ENCODE measurements at regions of chr11 and their contacts with region 1.

Region 1: DNA sequence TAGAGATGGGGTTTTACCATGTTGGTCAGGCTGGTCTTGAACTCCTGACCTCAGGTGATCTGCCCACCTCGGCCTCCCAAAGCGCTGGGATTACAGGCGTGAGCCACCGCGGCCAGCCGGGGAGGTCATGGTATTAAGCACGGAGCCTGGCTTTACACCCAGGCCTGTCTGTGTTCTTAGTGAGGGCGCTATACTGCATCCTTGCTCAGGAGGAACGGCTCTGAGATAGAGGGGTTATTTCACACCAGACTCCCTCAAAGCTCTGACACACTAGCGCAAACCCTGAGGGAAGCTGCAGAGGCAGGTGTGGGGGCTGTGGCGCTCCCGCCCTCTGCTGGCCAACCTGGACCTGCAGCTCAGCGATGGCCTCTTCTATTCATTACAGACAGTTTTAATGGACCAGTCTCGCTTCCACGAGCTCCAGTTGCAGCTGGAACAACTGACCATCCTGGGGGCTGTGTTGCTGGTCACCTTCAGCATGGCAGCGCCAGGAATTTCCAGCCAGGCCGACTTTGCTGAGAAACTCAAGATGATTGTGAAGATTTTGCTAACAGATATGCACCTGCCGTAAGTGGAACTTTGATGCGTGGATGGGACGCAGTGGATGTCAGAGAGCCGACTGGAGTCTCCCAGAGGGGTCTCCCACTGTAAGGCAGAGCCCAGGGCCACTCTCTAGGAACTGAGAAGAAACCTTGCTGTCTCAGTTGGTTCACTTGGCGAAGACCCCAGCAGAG is 26.2 kb downstream of the TCP11L1 start:
- DNase-seq: peak; percentile 61 to 85 (median 70)
- ATAC-seq: peak; percentile 96
- H3K4me3 ChIP-seq: no peak overlapping the region
- H3K4me3 Mint-ChIP-seq: no peak overlapping the region
- H3K27ac ChIP-seq: no peak overlapping the region
- H3K27ac Mint-ChIP-seq: no peak overlapping the region
- H3K4me1 ChIP-seq: peaks cover 19% of the 10 kb centered on the region
- H3K4me1 Mint-ChIP-seq: peaks cover 30% of the 10 kb centered on the region
- H3K27me3 ChIP-seq: no peaks in the 10 kb centered on the region
- H3K27me3 Mint-ChIP-seq: no peaks in the 10 kb centered on the region
- CTCF ChIP-seq: peak; percentile 97

Region 2: DNA sequence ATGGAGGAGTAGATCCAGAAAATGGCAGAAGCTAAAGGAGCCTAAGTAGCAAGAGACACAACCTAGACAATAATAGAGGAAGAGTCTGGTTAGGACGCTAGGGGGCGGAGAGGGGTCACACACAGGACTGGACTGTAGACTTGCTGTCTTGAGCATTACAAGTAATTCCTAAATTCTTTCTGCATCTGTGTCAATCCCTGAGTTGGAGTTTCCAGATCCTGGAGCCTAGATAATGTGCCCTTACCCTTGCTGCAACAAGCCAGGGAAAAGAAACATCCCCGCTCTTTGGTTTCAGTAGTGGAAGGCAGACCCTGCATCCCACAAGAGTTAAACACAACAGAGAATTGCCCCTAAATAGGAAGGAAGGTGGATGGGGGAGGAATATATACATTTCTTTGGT is 256.3 kb before region 1 on chr11:
- CTCF ChIA-PET with region 1: no interaction called
- POLR2A ChIA-PET with region 1: no interaction called
- intact Hi-C with region 1: loop called in 1 of 2 experiments (anchors 2 kb)
- DNase-seq: peak in 9 of 14 experiments; percentile 7 to 57 (median 21)
- ATAC-seq: peak; percentile 44
- H3K4me3 ChIP-seq: no peak overlapping the region
- H3K4me3 Mint-ChIP-seq: no peak overlapping the region
- H3K27ac ChIP-seq: no peak overlapping the region
- H3K27ac Mint-ChIP-seq: no peak overlapping the region
- H3K4me1 ChIP-seq: no peaks in the 10 kb centered on the region
- H3K4me1 Mint-ChIP-seq: no peaks in the 10 kb centered on the region
- H3K27me3 ChIP-seq: no peaks in the 10 kb centered on the region
- H3K27me3 Mint-ChIP-seq: no peaks in the 10 kb centered on the region
- CTCF ChIP-seq: peak; percentile 45

Region 3: DNA sequence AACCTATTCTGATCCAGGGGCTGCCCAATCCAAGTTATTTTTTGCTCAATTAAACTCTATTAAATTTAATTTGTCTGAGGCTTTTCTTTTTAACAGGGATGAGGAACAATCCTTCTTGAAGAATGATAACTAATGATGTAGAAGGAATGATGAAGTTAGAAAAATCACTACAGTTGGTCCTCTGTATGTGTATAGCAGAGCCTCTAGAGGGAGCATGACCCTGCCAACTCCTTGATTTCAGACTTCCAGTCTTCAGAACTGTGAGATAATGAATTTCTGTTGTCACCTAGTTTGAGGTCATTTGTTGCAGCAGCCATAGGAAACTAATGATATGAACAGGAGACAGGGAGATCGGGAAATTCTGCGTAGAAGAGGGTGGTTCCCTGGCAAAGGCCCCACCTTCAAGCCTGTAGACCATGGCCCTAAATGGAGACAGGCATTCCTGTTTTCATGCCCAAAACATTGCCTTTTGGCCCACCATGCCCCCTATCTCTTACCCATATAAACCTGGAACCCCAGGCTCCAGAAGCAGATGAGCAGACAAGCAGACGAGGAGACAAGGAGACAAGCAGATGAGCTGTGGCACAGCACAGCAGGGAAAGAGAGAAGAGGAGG is 180.7 kb before region 1 on chr11:
- CTCF ChIA-PET with region 1: no interaction called
- POLR2A ChIA-PET with region 1: no interaction called
- intact Hi-C with region 1: loop called (anchors 5 to 10 kb)
- DNase-seq: peak in 3 of 14 experiments; percentile 13 to 34 (median 33)
- ATAC-seq: peak; percentile 52
- H3K4me3 ChIP-seq: no peak overlapping the region
- H3K4me3 Mint-ChIP-seq: no peak overlapping the region
- H3K27ac ChIP-seq: no peak overlapping the region
- H3K27ac Mint-ChIP-seq: no peak overlapping the region
- H3K4me1 ChIP-seq: no peaks in the 10 kb centered on the region
- H3K4me1 Mint-ChIP-seq: no peaks in the 10 kb centered on the region
- H3K27me3 ChIP-seq: no peaks in the 10 kb centered on the region
- H3K27me3 Mint-ChIP-seq: no peaks in the 10 kb centered on the region
- CTCF ChIP-seq: peak; percentile 47

Region 4: DNA sequence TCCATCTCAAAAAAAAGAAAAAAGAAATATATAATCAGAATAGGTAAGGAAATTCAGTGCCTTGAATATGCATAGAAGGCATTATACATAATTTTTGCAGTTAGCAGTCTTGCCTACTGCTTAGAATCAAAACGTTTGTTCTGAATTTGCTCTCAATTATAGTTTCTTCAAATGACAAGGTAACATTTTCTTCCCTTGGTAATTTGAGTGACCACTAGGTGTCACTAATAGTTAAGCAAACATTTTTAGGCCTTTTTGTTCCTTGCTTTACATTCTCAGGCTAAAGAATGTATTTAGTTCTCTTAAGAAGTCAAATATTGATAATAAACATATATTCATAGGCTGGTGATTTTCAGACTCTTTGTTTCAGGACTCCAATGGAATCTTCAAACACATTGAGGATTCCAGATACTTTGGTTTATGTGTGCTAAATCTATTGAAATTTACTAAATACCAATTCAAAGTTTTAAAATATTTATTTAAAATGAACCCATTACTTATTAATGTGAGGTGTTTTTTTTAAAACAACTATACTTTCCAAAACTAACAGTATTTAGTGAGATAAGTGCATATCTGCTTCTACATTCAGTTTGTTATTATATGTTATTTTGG is 105.0 kb before region 1 on chr11:
- CTCF ChIA-PET with region 1: interaction called, 48 read pairs
- POLR2A ChIA-PET with region 1: no interaction called
- intact Hi-C with region 1: loop called (anchors 1 kb)
- DNase-seq: peak in 3 of 14 experiments; percentile 63 to 73 (median 73)
- ATAC-seq: no peak
- H3K4me3 ChIP-seq: no peak overlapping the region
- H3K4me3 Mint-ChIP-seq: no peak overlapping the region
- H3K27ac ChIP-seq: no peak overlapping the region
- H3K27ac Mint-ChIP-seq: no peak overlapping the region
- H3K4me1 ChIP-seq: no peaks in the 10 kb centered on the region
- H3K4me1 Mint-ChIP-seq: no peaks in the 10 kb centered on the region
- H3K27me3 ChIP-seq: no peaks in the 10 kb centered on the region
- H3K27me3 Mint-ChIP-seq: no peaks in the 10 kb centered on the region
- CTCF ChIP-seq: peak; percentile 81

Region 5: GRCh38 chr11:33000181-33000580 is 65.4 kb before region 1 on chr11:
- CTCF ChIA-PET with region 1: interaction called, 3 read pairs
- POLR2A ChIA-PET with region 1: no interaction called
- intact Hi-C with region 1: loop called in 1 of 2 experiments (anchors 10 kb)
- DNase-seq: no peak
- ATAC-seq: no peak
- H3K4me3 ChIP-seq: no peak overlapping the region
- H3K4me3 Mint-ChIP-seq: no peak overlapping the region
- H3K27ac ChIP-seq: no peak overlapping the region
- H3K27ac Mint-ChIP-seq: no peak overlapping the region
- H3K4me1 ChIP-seq: peaks cover 7% of the 10 kb centered on the region
- H3K4me1 Mint-ChIP-seq: peaks cover 16% of the 10 kb centered on the region
- H3K27me3 ChIP-seq: no peaks in the 10 kb centered on the region
- H3K27me3 Mint-ChIP-seq: no peaks in the 10 kb centered on the region
- CTCF ChIP-seq: no peak

Region 6: GRCh38 chr11:33039274-33040032 is 26.2 kb before region 1 on chr11 and contains the start of gene TCP11L1:
- CTCF ChIA-PET with region 1: interaction called, 11 read pairs
- POLR2A ChIA-PET with region 1: interaction called, 13 read pairs
- intact Hi-C with region 1: no loop called
- DNase-seq: peak; percentile 66 to 91 (median 78)
- ATAC-seq: peak; percentile 85
- H3K4me3 ChIP-seq: peak within 1 kb of the TSS; percentile 99
- H3K4me3 Mint-ChIP-seq: peak within 1 kb of the TSS; percentile 98
- H3K27ac ChIP-seq: peak within 1 kb of the TSS; percentile 62 to 90
- H3K27ac Mint-ChIP-seq: peak within 1 kb of the TSS; percentile 95
- H3K4me1 ChIP-seq: peaks cover 17% of the 10 kb centered on the region
- H3K4me1 Mint-ChIP-seq: peaks cover 17% of the 10 kb centered on the region
- H3K27me3 ChIP-seq: no peaks in the 10 kb centered on the region
- H3K27me3 Mint-ChIP-seq: peaks cover 5% of the 10 kb centered on the region
- CTCF ChIP-seq: no peak
- total RNA-seq, gene TCP11L1: 9.8 to 11.9 TPM

Region 7: DNA sequence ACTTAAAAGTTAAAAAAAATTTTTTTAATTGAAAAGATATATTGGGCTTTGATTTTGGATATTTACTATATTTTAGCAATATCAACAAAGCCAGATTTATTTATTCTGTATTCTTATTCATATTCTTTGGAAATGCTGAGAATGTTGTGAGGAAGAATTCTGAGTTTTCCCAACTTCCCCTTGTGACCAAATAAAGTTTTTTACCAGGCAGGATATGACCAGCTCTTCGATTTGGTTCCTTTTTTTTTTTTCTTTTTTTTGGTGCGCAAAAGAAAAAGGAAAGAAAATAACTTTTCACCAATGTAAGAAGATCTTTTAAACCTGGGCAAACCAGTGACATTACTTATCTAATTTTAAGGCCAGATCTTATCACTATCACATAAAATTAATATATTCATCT is 13.4 kb before region 1 on chr11:
- CTCF ChIA-PET with region 1: interaction called, 12 read pairs
- POLR2A ChIA-PET with region 1: no interaction called
- intact Hi-C with region 1: no loop called
- DNase-seq: peak in 1 of 14 experiments; percentile 8
- ATAC-seq: no peak
- H3K4me3 ChIP-seq: no peak overlapping the region
- H3K4me3 Mint-ChIP-seq: no peak overlapping the region
- H3K27ac ChIP-seq: no peak overlapping the region
- H3K27ac Mint-ChIP-seq: no peak overlapping the region
- H3K4me1 ChIP-seq: no peaks in the 10 kb centered on the region
- H3K4me1 Mint-ChIP-seq: peaks cover 4% of the 10 kb centered on the region
- H3K27me3 ChIP-seq: no peaks in the 10 kb centered on the region
- H3K27me3 Mint-ChIP-seq: no peaks in the 10 kb centered on the region
- CTCF ChIP-seq: no peak